Activated CD4-positive, alpha-beta T cell treated with anti-CD3 and anti-CD28 coated beads for 36 hours (primary cell): ENCODE measurements at regions of chr13 and their contacts with region 1.

Region 1: GRCh38 chr13:40517486-40518480 is 148.7 kb downstream of the FOXO1 start:
- DNase-seq: peak; percentile 54
- ATAC-seq: peak; percentile 71
- H3K4me3 Mint-ChIP-seq: peak overlapping the region; percentile 44
- H3K27ac Mint-ChIP-seq: peak overlapping the region; percentile 91
- H3K4me1 Mint-ChIP-seq: peaks cover 84% of the 10 kb centered on the region
- H3K27me3 Mint-ChIP-seq: no peaks in the 10 kb centered on the region

Region 2: GRCh38 chr13:40251343-40252032 is 266.3 kb before region 1 on chr13:
- CTCF ChIA-PET with region 1: no interaction called
- POLR2A ChIA-PET with region 1: no interaction called
- intact Hi-C with region 1: loop called in 1 of 2 experiments (anchors 1 kb)
- DNase-seq: peak; percentile 23
- ATAC-seq: peak; percentile 87
- H3K4me3 Mint-ChIP-seq: no peak overlapping the region
- H3K27ac Mint-ChIP-seq: peak overlapping the region; percentile 82
- H3K4me1 Mint-ChIP-seq: peaks cover 50% of the 10 kb centered on the region
- H3K27me3 Mint-ChIP-seq: no peaks in the 10 kb centered on the region

Region 3: GRCh38 chr13:40352380-40352778 is 165.4 kb before region 1 on chr13:
- CTCF ChIA-PET with region 1: no interaction called
- POLR2A ChIA-PET with region 1: no interaction called
- intact Hi-C with region 1: no loop called
- DNase-seq: no peak
- ATAC-seq: no peak
- H3K4me3 Mint-ChIP-seq: no peak overlapping the region
- H3K27ac Mint-ChIP-seq: no peak overlapping the region
- H3K4me1 Mint-ChIP-seq: peaks cover 16% of the 10 kb centered on the region
- H3K27me3 Mint-ChIP-seq: no peaks in the 10 kb centered on the region

Region 4: DNA sequence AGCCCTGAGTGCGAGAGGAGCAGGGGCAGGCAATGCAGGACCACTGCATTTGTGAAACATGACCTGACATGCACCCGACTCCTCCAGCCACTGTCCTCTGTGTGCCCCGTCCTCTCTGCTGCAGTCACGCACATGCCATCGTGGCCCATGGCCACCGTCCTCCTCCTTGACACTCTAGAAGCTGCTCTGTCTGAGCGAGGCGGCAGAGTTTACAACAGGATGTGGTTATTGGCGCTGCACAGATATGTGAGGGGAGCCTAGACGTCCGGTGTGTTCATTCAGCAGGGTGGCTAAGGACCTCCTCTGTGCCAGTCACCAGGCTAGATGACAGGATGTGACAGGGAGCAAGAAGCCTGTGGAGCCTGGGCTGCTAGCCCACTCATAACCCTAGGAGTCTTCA is 129.2 kb before region 1 on chr13:
- CTCF ChIA-PET with region 1: no interaction called
- POLR2A ChIA-PET with region 1: no interaction called
- intact Hi-C with region 1: loop called in 1 of 2 experiments (anchors 2 kb)
- DNase-seq: peak; percentile 89
- ATAC-seq: peak; percentile 98
- H3K4me3 Mint-ChIP-seq: peak overlapping the region; percentile 71
- H3K27ac Mint-ChIP-seq: peak overlapping the region; percentile 95
- H3K4me1 Mint-ChIP-seq: peaks cover 44% of the 10 kb centered on the region
- H3K27me3 Mint-ChIP-seq: no peaks in the 10 kb centered on the region

Region 5: GRCh38 chr13:40445557-40445990 is 72.2 kb before region 1 on chr13:
- CTCF ChIA-PET with region 1: no interaction called
- POLR2A ChIA-PET with region 1: no interaction called
- intact Hi-C with region 1: no loop called
- DNase-seq: peak; percentile 47
- ATAC-seq: peak; percentile 86
- H3K4me3 Mint-ChIP-seq: no peak overlapping the region
- H3K27ac Mint-ChIP-seq: no peak overlapping the region
- H3K4me1 Mint-ChIP-seq: peaks cover 14% of the 10 kb centered on the region
- H3K27me3 Mint-ChIP-seq: no peaks in the 10 kb centered on the region

Region 6: GRCh38 chr13:40494513-40494912 is 23.3 kb before region 1 on chr13:
- CTCF ChIA-PET with region 1: interaction called, 3 read pairs
- POLR2A ChIA-PET with region 1: no interaction called
- intact Hi-C with region 1: loop called in 1 of 2 experiments (anchors 2 kb)
- DNase-seq: no peak
- ATAC-seq: peak; percentile 43
- H3K4me3 Mint-ChIP-seq: peak overlapping the region; percentile 62
- H3K27ac Mint-ChIP-seq: peak overlapping the region; percentile 90
- H3K4me1 Mint-ChIP-seq: peaks cover 76% of the 10 kb centered on the region
- H3K27me3 Mint-ChIP-seq: no peaks in the 10 kb centered on the region

Region 7: GRCh38 chr13:40777166-40777808 is 259.5 kb after region 1 on chr13:
- CTCF ChIA-PET with region 1: no interaction called
- POLR2A ChIA-PET with region 1: no interaction called
- intact Hi-C with region 1: loop called in 1 of 2 experiments (anchors 5 kb)
- DNase-seq: peak; percentile 57
- ATAC-seq: peak; percentile 49
- H3K4me3 Mint-ChIP-seq: peak overlapping the region; percentile 52
- H3K27ac Mint-ChIP-seq: peak overlapping the region; percentile 98
- H3K4me1 Mint-ChIP-seq: peaks cover 29% of the 10 kb centered on the region
- H3K27me3 Mint-ChIP-seq: no peaks in the 10 kb centered on the region

Region 8: GRCh38 chr13:41848435-41849255 is 1330.9 kb after region 1 on chr13:
- CTCF ChIA-PET with region 1: no interaction called
- POLR2A ChIA-PET with region 1: no interaction called
- intact Hi-C with region 1: no loop called
- DNase-seq: peak; percentile 6
- ATAC-seq: no peak
- H3K4me3 Mint-ChIP-seq: no peak overlapping the region
- H3K27ac Mint-ChIP-seq: no peak overlapping the region
- H3K4me1 Mint-ChIP-seq: no peaks in the 10 kb centered on the region
- H3K27me3 Mint-ChIP-seq: no peaks in the 10 kb centered on the region